BJ (cell line): ENCODE measurements at regions of chr9 and their contacts with region 1.

Region 1: GRCh38 chr9:130860458-130861316 is 25.6 kb downstream of the ABL1 start:
- DNase-seq: peak; percentile 86
- H3K4me3 ChIP-seq: no peak overlapping the region
- H3K27me3 ChIP-seq: no peaks in the 10 kb centered on the region
- CTCF ChIP-seq: peak; percentile 42

Region 2: GRCh38 chr9:130770679-130771442 is 89.8 kb before region 1 on chr9:
- CTCF ChIA-PET with region 1: interaction called, 103 read pairs
- POLR2A ChIA-PET with region 1: no interaction called
- DNase-seq: no peak
- H3K4me3 ChIP-seq: no peak overlapping the region
- H3K27me3 ChIP-seq: no peaks in the 10 kb centered on the region
- CTCF ChIP-seq: peak; percentile 62